HCT116 (cell line): ENCODE measurements at regions of chr6 and their contacts with region 1.

Region 1: DNA sequence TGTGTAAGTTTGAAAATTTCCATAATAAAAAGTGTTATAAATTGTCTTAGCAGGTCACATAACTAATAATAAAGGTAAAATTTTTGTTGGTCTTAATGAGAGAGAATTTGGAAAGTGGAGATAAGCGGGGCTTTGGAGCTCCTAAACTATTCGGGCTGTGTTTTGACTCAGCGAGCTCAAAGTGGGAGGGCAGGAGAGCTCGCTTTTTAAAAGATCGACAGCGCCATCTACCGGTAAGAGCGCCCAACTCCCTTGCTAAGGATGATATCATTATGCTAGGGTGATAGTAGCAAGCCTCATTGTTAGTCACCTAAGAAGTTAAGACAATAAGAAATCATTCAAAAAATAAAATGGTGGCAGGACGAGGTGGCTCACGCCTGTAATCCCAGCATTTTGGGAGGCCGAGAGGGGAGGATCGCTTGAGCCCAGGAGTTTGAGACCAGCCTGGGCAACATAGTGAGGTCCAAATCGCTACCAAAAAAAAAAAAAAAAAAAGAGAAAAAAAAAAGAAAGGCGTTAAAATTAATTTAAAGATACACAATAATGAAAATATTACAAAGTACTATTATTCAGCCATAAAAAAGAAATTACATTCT is 24.8 kb downstream of the C6orf15 start:
- DNase-seq: peak; percentile 72
- ATAC-seq: peak; percentile 88
- H3K4me3 ChIP-seq: no peak overlapping the region
- H3K27ac ChIP-seq: no peak overlapping the region
- H3K4me1 ChIP-seq: peaks cover 15 to 26% of the 10 kb centered on the region in 2 experiments
- H3K27me3 ChIP-seq: no peaks in the 10 kb centered on the region
- CTCF ChIP-seq: peak; percentile 66 to 75 (median 71); a peak in 5 of 6 replicates
- POLR2A ChIP-seq: no peak
- RAD21 ChIP-seq: peak; percentile 80

Region 2: DNA sequence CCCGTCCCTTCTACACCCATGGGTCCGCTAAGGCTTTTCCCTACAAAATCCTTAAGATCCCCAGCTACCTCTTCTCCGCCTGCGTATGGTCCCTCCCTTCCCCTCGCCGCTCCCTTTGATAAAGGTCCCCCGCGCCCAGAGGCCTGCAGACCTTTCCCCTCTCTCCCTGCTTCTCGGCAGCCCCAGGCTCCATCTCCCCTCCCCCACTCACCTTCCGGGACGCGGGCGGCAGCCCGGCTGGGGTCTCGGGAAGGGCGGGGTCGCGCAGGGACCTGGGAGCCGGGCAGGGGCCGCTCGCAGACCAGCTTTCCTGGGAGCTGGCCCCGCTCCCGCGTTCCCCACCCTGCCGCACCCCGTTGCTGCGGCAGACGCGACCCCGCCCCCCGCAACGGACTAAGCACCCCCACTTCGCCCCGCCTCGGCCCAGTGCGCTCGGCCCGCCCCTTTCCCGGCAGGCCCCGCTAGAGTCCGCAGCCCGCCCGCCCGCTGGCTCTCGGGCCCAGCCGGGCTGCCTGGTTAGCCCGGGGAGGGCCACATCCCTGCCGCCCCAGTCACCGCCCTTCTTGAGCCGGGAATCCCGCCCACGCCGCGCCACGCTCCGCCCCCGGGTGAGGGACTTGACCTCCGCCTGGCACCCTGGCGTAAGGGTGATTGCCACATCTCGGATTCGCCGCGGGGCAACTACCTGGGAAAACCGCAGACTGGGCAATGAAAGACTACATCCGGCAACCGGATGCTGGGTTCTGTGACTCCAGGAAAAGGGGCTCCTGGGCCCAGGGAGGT is 345.1 kb before region 1 on chr6 and contains the start of gene FLOT1:
- CTCF ChIA-PET with region 1: no interaction called
- POLR2A ChIA-PET with region 1: interaction called, 4 read pairs
- RAD21 ChIA-PET with region 1: no interaction called
- intact Hi-C with region 1: loop called (anchors 10 kb)
- DNase-seq: peak; percentile 94
- ATAC-seq: peak; percentile 70
- H3K4me3 ChIP-seq: peak within 1 kb of the TSS; percentile 79 to 85
- H3K27ac ChIP-seq: peak within 1 kb of the TSS; percentile 93
- H3K4me1 ChIP-seq: peaks cover 37 to 79% of the 10 kb centered on the region in 2 experiments
- H3K27me3 ChIP-seq: no peaks in the 10 kb centered on the region
- CTCF ChIP-seq: no peak
- POLR2A ChIP-seq: peak; percentile 98
- RAD21 ChIP-seq: no peak
- total RNA-seq, gene FLOT1: 117 TPM

Region 3: DNA sequence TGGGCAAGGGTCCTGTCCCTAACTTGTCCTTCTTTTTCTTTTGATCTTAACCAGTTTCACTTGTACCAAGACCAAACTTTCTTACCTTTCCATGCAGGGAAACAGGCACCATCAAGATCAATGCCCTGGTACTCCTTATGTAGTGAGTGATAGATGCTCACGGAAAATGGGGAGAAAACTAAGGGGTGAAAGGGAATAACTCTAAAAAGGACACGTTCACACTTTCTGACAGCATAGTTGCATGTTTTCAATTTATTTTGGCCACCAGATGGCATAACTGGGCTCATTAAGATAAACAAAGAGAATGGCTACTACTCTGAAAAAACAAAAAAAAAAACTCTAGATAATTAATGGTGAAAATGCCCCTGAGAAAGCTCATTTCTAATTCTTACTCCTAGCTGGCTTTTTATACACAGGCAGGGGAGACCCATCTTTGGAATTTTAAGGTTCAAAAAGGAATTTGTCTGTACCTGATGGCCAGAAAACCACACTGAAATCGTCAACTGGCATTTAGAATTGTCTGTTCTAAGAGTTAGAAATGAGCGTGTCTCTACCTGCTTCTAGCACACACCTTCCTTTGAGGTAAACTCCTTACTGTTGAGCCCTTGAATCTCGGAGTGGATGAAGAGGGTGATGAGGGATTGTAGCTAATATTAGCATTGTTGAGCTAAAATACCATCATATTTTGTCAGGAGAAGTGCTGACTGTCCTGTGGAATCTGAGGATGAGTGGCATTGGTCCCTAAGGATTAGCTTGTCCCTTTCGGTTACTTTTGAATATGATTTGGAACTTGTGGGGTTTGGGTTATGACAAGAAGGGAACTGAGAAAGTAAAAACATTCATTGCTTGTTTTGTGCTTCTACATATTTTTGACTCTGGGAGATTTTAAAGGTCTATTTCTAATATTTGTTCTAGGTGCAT is 265.5 kb before region 1 on chr6:
- CTCF ChIA-PET with region 1: interaction called, 33 read pairs
- POLR2A ChIA-PET with region 1: interaction called, 4 read pairs
- RAD21 ChIA-PET with region 1: no interaction called
- intact Hi-C with region 1: no loop called
- DNase-seq: no peak
- ATAC-seq: peak; percentile 20; the same call in 1 of the 2 replicates
- H3K4me3 ChIP-seq: no peak overlapping the region
- H3K27ac ChIP-seq: peak overlapping the region; percentile 97
- H3K4me1 ChIP-seq: peaks cover 58 to 72% of the 10 kb centered on the region in 2 experiments
- H3K27me3 ChIP-seq: no peaks in the 10 kb centered on the region
- CTCF ChIP-seq: peak in 2 of 3 experiments; percentile 44 to 57; a peak in 3 of 6 replicates
- POLR2A ChIP-seq: no peak
- RAD21 ChIP-seq: no peak

Region 4: DNA sequence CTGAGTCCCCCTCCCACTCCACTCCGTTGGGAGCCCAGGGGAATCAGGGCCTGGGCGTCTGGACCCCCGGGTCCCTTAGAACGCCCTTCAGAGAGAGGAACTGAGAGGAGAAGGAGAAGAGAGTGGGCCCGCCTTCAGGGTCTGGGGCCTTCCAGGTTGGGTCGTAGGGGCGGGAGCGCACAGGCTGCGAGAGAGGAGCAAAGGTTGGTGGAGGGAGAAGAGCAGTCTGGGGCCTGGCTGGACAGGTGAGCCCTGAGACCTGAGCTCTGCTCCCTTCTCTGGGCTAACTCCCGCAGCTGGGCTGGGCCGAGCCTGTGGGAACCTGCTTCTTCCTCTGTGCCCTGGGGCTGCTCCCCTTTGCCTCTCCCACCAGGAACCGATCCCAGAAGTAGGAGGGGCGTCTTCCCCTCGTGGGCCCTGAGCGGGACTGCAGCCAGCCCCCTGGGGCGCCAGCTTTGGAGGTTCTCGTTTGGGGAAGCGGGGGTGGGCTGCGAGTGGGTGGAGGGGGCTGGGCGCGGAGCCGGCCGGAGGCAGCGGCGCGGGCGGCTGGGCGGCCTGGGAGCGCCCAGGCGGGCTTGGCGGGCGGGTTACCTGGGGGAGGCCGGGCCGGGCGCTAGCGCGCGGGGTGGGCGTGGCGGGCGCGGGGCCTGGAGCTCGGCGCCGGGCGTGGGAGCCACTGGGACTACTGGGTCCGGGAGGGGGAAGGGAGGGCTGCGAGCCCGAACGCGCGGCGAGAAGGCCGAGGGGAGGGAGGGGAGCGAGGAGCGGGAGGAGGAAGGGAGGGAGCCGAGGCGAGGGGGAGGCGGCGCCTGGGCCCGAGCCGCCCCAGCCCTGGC is 203.7 kb before region 1 on chr6 and contains the start of gene DDR1:
- CTCF ChIA-PET with region 1: interaction called, 16 read pairs
- POLR2A ChIA-PET with region 1: interaction called, 5 read pairs
- RAD21 ChIA-PET with region 1: no interaction called
- intact Hi-C with region 1: no loop called
- DNase-seq: no peak
- ATAC-seq: peak; percentile 30
- H3K4me3 ChIP-seq: peak within 1 kb of the TSS; percentile 83 to 87
- H3K27ac ChIP-seq: peak within 1 kb of the TSS; percentile 99
- H3K4me1 ChIP-seq: peaks cover 50 to 65% of the 10 kb centered on the region in 2 experiments
- H3K27me3 ChIP-seq: no peaks in the 10 kb centered on the region
- CTCF ChIP-seq: no peak
- POLR2A ChIP-seq: no peak
- RAD21 ChIP-seq: no peak
- total RNA-seq, gene DDR1: 211 TPM

Region 5: DNA sequence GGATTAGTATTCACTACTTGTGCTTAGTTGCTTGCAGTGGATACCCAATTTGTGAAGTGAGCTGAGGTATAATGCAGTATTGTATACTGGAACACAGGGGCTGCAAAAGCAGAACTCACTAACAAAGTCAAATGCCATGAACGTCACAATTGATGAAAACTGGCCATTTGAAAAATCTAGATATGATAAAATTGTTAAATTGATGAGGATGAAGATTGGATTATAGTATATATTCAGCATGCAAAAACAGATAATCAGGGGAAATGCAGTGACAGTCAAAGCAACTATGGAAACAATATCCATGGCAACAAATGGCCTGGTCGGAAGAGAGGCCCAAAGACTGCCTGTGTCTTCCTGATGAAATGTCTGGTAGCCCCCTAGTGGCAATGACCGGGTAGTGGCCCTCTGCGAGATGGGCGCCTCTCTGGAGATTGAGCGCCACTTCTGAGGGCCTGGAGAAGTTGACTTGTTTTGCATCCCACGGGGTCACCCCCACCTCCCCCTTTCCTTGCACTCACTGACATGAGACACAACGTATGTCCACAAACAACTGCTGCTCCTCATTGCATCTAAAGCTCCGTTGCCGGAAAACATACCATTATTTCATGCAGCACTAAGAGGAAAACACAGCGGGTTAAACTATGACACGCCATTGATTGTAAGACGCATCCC is 18.8 kb before region 1 on chr6:
- CTCF ChIA-PET with region 1: interaction called, 18 read pairs
- POLR2A ChIA-PET with region 1: interaction called, 3 read pairs
- RAD21 ChIA-PET with region 1: no interaction called
- intact Hi-C with region 1: no loop called
- DNase-seq: peak; percentile 81
- ATAC-seq: peak; percentile 94
- H3K4me3 ChIP-seq: no peak overlapping the region
- H3K27ac ChIP-seq: no peak overlapping the region
- H3K4me1 ChIP-seq: peaks cover 4 to 14% of the 10 kb centered on the region in 2 experiments; a peak in 3 of 4 replicates
- H3K27me3 ChIP-seq: no peaks in the 10 kb centered on the region
- CTCF ChIP-seq: peak; percentile 88 to 92 (median 91)
- POLR2A ChIP-seq: no peak
- RAD21 ChIP-seq: peak; percentile 82

Region 6: DNA sequence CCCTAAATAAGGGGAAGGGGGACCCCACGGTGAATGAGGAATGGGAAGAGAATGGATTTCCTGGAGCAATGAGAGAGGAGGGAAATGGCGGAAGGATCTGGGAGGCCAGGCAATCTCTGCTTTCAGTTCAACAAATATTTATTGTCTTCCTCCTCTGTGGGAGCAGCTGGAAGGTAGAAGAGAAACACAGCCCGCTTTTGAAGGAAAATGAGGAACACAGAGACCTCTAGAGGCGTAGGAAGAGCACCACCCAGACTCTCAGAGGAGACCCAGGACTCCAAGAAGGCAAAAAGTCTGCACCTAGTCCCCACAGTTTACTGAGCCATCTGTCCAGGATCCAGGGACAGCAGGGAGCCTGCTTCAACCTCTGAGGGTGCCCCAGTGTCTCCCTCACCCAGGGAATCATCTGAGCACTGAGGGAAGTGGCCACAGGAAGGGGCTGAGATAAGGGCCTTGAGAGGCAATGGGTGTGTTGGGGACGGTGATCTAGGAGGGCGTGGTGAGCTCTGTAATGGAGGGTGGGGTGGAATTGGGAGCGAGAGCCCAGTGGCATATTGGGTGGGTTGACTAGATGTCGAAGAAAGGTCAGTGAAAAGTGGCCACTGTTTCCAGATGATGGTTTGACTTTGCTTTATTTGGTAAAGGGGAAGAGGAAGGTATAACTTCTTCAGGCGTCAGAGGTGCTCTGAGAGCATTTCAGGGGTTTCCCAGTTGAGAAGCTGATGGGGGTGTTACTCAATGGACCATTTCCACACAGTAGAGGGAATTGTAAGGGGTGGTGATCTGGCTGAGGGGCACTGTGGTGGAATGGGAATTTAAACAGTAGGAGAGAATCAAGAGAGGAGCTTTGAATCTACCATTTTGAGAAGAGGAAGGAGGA is 27.6 kb after region 1 on chr6:
- CTCF ChIA-PET with region 1: interaction called, 21 read pairs
- POLR2A ChIA-PET with region 1: interaction called, 11 read pairs
- RAD21 ChIA-PET with region 1: interaction called in 1 of 2 experiments, 6 read pairs
- intact Hi-C with region 1: no loop called
- DNase-seq: peak; percentile 58
- ATAC-seq: peak; percentile 74
- H3K4me3 ChIP-seq: peak overlapping the region; percentile 51 to 64
- H3K27ac ChIP-seq: peak overlapping the region; percentile 83
- H3K4me1 ChIP-seq: peaks cover 29 to 49% of the 10 kb centered on the region in 2 experiments
- H3K27me3 ChIP-seq: no peaks in the 10 kb centered on the region
- CTCF ChIP-seq: peak; percentile 52 to 55 (median 53); a peak in 5 of 6 replicates
- POLR2A ChIP-seq: no peak
- RAD21 ChIP-seq: peak; percentile 60